ENCODE measurements at regions of chr19 and their contacts with region 1.

Region 1: DNA sequence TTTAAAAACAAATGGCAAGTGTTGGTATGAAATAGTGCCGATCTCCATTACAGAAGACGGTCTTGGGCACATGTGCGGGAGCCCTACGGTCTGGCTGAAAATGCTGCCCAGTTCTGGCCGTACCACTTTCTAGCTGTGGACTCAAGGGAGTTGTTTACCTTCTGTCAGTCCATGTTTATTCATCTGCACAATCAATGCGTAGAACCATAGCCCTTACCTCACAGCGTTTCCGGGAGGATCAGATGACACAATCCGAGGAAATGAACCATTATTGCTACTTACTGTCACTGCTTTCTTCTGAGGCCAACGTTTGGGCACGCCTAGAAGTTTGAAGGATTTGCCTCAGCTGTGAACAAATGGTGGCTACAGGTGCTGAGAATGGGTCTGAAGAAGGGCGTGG is 31.2 kb downstream of the GADD45B start:
- DNase-seq: peak; percentile 65 to 92
- H3K4me3 ChIP-seq: peak overlapping the region in 2 of 4 donors; percentile 7 to 16
- H3K27ac ChIP-seq: peak overlapping the region in 4 of 5 donors; percentile 60 to 71 (median 67)
- H3K4me1 ChIP-seq: peaks cover 6 to 26% (median 12%) of the 10 kb centered on the region in 4 donors
- H3K27me3 ChIP-seq: no peaks in the 10 kb centered on the region
- CTCF ChIP-seq: no peak
- EP300 ChIP-seq: no peak
- POLR2A ChIP-seq: no peak

Region 2: GRCh38 chr19:2561895-2562294 is 54.8 kb after region 1 on chr19:
- intact Hi-C with region 1: loop called (anchors 10 kb)
- DNase-seq: peak in 1 of 2 donors; percentile 44
- H3K4me3 ChIP-seq: peak overlapping the region in 3 of 4 donors; percentile 4 to 27 (median 12)
- H3K27ac ChIP-seq: no peak overlapping the region
- H3K4me1 ChIP-seq: no peaks in the 10 kb centered on the region
- H3K27me3 ChIP-seq: no peaks in the 10 kb centered on the region
- CTCF ChIP-seq: no peak
- EP300 ChIP-seq: no peak
- POLR2A ChIP-seq: no peak

Measured in stomach (tissue), 19 donors.